Activated B cell treated with CpG ODN at 0.5 μM for 24 hours (primary cell): ENCODE measurements at regions of chr17 and their contacts with region 1.

Region 1: GRCh38 chr17:17051791-17052461 is 9.7 kb downstream of the MPRIP start:
- DNase-seq: peak; percentile 12
- ATAC-seq: no peak
- H3K4me3 Mint-ChIP-seq: no peak overlapping the region
- H3K27ac Mint-ChIP-seq: no peak overlapping the region
- H3K4me1 Mint-ChIP-seq: peaks cover 70% of the 10 kb centered on the region
- H3K27me3 Mint-ChIP-seq: no peaks in the 10 kb centered on the region
- CTCF ChIP-seq: no peak

Region 2: DNA sequence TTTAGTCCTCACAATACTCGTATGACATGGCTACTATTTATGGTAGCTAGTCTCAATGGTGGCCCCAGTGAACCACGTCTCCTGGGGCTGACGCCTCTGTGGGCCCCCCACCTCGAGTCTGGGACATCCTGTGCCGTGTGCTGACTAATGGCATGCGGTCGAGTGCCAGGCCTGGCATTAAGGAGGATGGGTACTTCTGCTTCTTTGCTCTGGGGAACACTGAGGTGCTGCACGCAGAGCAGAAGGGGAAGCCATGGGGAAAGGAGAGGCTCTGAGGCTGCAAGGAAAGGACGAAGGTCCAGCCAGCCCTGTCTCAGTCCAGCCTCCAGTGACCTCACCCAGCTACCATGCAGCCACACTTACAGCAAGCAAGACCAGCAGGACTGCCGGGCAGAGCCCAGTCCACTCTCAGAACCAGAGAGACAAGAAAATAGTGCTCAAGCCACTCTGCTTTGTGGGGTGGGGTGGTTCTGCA is 15.4 kb before region 1 on chr17:
- CTCF ChIA-PET with region 1: no interaction called
- POLR2A ChIA-PET with region 1: interaction called, 6 read pairs
- intact Hi-C with region 1: loop called (anchors 2 kb)
- DNase-seq: peak; percentile 53
- ATAC-seq: peak; percentile 96
- H3K4me3 Mint-ChIP-seq: no peak overlapping the region
- H3K27ac Mint-ChIP-seq: peak overlapping the region; percentile 78
- H3K4me1 Mint-ChIP-seq: peaks cover 19% of the 10 kb centered on the region
- H3K27me3 Mint-ChIP-seq: no peaks in the 10 kb centered on the region
- CTCF ChIP-seq: no peak